ENCODE measurements at regions of chr13 and their contacts with region 1.

Region 1: DNA sequence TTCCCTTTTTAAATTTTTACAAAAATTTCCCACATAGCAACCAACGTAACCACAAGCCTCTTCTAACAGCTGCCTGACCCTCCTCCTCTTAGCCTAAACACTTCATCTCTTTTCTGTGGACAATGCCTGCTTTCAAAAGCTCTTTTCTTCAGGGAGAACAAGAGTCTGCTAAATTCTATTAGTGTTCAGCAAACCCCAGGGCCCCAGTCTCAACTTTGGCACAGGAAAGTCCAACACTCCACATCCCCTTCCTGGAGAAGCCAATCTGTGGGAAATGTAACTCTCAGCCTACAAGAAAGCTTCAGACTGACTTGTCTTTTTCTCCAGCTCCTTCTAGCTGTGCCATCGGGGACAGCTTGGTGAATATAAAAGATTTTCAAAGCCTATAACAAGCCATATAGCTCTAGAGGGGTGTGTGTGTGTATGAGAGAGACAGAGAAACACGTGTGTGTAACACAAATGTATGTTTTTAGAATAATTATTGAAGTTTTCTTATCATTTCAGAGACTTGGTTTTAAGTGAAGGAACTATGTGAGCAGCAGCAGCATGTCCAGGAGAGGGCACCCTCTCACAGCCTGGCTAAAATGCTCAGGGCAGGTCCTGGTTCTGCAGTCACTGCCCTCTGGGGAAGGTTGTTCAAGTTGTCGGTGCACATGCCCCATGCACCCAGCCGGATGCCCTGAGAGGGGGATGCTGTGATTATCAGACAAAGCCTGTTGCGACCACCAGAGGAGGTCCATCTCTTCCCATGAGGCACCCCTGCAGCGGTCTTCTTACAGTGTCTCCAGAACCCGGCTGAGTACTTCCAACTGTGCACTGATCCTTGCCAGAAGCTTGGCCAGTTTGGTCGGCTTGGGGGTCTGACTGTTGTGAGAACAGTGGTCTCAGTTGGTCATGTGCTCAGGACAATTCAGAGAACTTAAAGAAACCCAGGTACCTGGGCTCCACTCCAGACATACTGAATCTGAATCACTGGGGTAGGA is 34.4 kb downstream of the CCDC70 start:
- DNase-seq: peak; percentile 69
- CTCF ChIP-seq: peak; percentile 75

Region 2: GRCh38 chr13:51874651-51875050 is 21.5 kb before region 1 on chr13:
- CTCF ChIA-PET with region 1: no interaction called
- POLR2A ChIA-PET with region 1: no interaction called
- DNase-seq: no peak
- CTCF ChIP-seq: no peak

Region 3: DNA sequence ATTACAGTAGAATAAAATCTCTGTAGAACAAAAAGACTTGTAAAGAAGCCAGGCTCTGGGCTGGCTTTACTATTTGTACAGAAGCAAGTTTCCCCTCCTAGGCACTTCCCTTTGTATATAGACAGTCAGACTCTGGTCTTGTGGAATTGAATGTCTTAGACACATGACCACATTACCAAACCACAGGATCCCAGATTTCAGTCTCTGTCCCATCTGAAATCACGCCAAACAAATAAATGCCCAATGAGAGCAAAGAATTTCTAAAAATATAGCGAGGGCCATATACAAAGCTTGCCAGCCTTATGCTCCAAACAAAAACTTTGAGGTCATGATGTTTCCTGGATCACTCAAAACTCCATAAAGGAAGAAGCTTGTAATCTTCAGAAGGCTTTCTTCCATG is 10.5 kb before region 1 on chr13:
- CTCF ChIA-PET with region 1: interaction called, 19 read pairs
- POLR2A ChIA-PET with region 1: no interaction called
- DNase-seq: no peak
- CTCF ChIP-seq: no peak

Region 4: DNA sequence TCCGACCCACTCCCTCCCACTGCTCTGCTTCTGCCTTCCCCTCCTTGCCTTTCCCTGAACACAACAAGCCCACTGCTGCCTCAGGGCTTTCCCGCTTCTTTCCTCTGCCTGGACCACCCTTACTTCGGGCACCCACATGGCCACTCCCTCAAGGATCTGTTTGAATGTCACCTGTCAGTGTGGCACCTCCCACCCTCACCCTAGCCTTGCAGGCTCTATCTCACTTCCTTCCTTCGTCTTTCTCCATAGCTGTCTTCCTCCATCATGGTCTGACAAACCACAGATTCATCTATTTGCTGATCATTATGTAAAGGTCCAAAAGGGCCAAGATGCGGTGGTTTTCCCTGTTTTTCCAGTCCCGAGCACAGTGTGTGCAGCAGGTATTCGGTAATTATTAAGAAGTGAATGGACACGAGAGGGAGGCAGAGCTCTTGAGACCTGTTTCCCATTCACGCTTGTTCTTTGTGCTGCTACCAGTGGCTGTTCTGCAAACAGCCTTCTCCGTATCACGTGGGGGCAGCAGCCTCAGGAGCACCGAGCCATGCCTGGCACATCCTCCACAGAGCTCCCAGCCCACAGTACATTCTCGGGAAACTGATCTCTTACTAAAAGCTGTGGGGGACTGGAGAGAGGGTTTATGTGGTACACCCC is 15.8 kb after region 1 on chr13:
- CTCF ChIA-PET with region 1: interaction called, 14 read pairs
- POLR2A ChIA-PET with region 1: no interaction called
- DNase-seq: no peak
- CTCF ChIP-seq: no peak

Region 5: GRCh38 chr13:52112591-52112990 is 216.4 kb after region 1 on chr13:
- CTCF ChIA-PET with region 1: no interaction called
- POLR2A ChIA-PET with region 1: no interaction called
- DNase-seq: no peak
- CTCF ChIP-seq: no peak